ENCODE measurements at regions of chr1 and their contacts with region 1.

Region 1: GRCh38 chr1:70319750-70320149 is 34.8 kb downstream of the ANKRD13C start:
- DNase-seq: no peak
- ATAC-seq: no peak
- H3K4me3 Mint-ChIP-seq: no peak overlapping the region
- H3K27ac Mint-ChIP-seq: no peak overlapping the region
- H3K4me1 Mint-ChIP-seq: peaks cover 10% of the 10 kb centered on the region
- H3K27me3 Mint-ChIP-seq: no peaks in the 10 kb centered on the region

Region 2: GRCh38 chr1:69998847-69999246 is 320.9 kb before region 1 on chr1:
- CTCF ChIA-PET with region 1: no interaction called
- POLR2A ChIA-PET with region 1: interaction called, 11 read pairs
- intact Hi-C with region 1: no loop called
- DNase-seq: no peak
- ATAC-seq: no peak
- H3K4me3 Mint-ChIP-seq: no peak overlapping the region
- H3K27ac Mint-ChIP-seq: no peak overlapping the region
- H3K4me1 Mint-ChIP-seq: no peaks in the 10 kb centered on the region
- H3K27me3 Mint-ChIP-seq: no peaks in the 10 kb centered on the region